A673 (cell line): ENCODE measurements at regions of chr2 and their contacts with region 1.

Region 1: GRCh38 chr2:231706731-231707624 is 1.3 kb upstream of the PTMA start:
- DNase-seq: peak; percentile 99
- H3K4me3 ChIP-seq: peak overlapping the region; percentile 59
- H3K27ac ChIP-seq: peak overlapping the region; percentile 97
- H3K4me1 ChIP-seq: peaks cover 15% of the 10 kb centered on the region
- H3K27me3 ChIP-seq: no peaks in the 10 kb centered on the region
- CTCF ChIP-seq: peak; percentile 99

Region 2: DNA sequence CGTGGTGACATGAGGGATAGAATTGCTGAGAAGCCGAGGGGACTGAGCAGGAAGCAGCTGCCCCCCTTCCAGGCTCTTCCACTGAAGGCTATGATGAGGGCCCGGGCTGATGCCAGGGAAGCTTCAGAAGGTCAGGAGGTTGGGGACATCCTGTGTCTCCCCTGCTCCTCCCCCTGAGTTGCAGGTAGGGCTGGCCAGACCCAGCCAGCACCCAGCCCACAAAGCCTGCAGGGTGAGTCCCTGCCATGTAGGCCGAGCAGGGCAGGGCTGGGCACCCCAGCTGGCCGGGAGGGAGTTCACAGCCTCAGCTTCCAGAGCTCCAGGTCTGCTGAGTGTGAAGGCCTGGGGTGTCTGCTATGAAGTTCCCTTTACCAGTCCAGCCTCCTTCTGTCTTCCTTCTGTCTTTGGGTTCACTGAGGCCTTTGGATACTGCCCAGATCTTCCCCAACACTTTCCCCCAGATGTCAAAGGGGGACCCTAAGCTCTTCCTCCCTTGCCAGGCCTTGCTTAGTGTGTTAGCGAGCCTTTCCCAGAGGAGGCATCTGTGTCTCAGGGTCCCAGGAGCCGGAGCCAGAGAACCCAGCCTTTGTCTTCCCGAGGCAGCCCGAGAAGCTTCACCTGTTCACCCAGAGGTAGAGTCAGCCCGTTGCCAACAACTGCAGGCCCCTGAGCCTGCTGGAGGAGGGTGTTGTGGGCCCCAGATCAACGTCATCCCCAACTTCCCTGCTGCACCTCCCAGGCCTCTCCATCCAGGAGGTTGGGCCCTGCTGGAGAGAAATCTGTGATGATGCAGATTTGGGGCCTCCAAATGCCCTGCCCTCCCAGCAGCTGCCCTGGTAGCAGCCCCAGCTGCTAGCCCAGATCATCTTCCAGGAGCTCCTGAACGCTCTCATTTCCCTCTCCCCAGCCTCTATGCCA is 239.1 kb before region 1 on chr2:
- CTCF ChIA-PET with region 1: no interaction called
- POLR2A ChIA-PET with region 1: no interaction called
- intact Hi-C with region 1: no loop called
- DNase-seq: no peak
- H3K4me3 ChIP-seq: no peak overlapping the region
- H3K27ac ChIP-seq: no peak overlapping the region
- H3K4me1 ChIP-seq: peaks cover 9% of the 10 kb centered on the region
- H3K27me3 ChIP-seq: no peaks in the 10 kb centered on the region
- CTCF ChIP-seq: no peak

Region 3: DNA sequence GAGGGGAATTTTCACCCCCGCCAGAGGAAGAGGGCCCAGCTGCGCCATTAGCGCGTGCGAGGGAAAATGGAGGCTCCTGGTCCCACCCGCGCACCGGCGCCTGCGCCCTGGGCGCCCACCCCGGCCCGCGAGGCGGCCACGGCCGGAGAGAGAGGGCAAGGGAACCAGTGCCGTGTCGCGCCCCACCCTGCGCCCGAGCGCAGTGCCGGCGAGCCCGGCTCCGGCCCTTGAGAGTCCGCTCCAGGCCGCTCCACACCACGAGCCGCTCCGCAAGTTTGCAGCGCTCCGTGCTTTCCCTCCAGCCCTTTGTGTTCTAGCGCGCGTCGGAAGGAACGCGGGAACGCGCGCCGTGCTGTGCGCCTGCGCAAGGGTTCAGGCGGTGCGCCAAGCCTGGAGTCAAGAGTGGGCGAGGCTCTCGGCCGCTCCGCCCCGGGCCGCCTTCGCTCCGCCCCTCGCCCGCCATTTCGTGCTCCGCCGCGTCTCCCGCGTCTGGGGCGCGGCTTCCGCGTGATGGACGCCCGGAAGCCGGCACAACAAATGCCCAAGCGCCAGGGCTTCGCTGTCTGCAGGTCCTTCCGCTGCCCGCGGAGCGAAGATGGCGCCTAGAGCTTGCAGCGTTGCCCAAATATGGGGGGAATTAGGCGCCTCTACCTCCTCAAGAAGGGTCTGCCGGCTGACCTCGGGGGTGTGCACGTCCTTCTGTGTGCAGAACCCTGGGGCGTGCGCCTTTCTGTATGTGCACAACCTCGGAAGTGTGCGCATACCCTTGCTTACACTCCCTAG is 44.8 kb before region 1 on chr2:
- CTCF ChIA-PET with region 1: interaction called, 5 read pairs
- POLR2A ChIA-PET with region 1: no interaction called
- intact Hi-C with region 1: loop called (anchors 1 kb)
- DNase-seq: peak; percentile 92
- H3K4me3 ChIP-seq: peak overlapping the region; percentile 25
- H3K27ac ChIP-seq: peak overlapping the region; percentile 63
- H3K4me1 ChIP-seq: peaks cover 7% of the 10 kb centered on the region
- H3K27me3 ChIP-seq: no peaks in the 10 kb centered on the region
- CTCF ChIP-seq: no peak